Left cardiac atrium (tissue), 4 donors: ENCODE measurements at regions of chr12 and their contacts with region 1.

Region 1: GRCh38 chr12:124053851-124054250 is 80.8 kb downstream of the ZNF664 start:
- DNase-seq: peak; percentile 60
- ATAC-seq: peak; percentile 90 to 95

Region 2: GRCh38 chr12:124311292-124312109 is 257.6 kb after region 1 on chr12:
- intact Hi-C with region 1: loop called in 1 of 2 experiments (anchors 10 kb)
- DNase-seq: no peak
- ATAC-seq: peak in 1 of 2 donors; percentile 10

Region 3: DNA sequence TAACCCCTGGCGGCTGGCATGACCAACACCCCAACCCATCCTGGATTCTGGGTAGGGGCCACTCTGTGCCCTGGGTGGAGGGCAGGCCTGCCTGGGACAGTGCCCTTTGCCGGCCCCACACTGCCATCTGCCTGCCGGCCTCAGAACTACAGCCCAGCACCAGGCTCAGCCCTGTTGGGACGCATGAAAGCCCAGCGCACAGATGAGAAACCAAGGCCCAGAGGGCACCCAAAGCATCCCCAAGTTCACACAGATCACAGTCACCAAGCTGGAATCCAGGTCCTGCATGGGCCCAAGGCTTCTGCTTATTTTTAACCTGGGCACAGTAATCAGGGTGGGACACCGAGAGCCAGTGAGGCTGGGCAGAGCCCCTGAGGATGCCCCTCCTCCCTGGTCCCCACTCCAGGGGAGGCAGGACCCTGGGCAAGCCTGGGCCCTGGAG is 267.2 kb after region 1 on chr12:
- intact Hi-C with region 1: loop called (anchors 5 to 10 kb)
- DNase-seq: peak; percentile 71
- ATAC-seq: peak; percentile 77 to 83

Region 4: GRCh38 chr12:124904306-124905098 is 850.7 kb after region 1 on chr12:
- intact Hi-C with region 1: loop called in 1 of 2 experiments (anchors 5 kb)
- DNase-seq: peak; percentile 91
- ATAC-seq: peak; percentile 95 to 96